Activated T-helper 1 cell treated with anti-CD3 and anti-CD28 coated beads, Interleukin-12 subunit alpha, Interleukin-12 subunit beta, Interleukin-2, Interleukin-4 antibody, amounts not matched to agents 30 ng/mL and 10 ng/mL and 1 ng/mL, durations not matched to agents 14 hours and 24 hours and 36 hours (primary cell): ENCODE measurements at regions of chr10 and their contacts with region 1.

Region 1: GRCh38 chr10:24503461-24504320 is 220.0 kb downstream of the ARHGAP21 start:
- DNase-seq: no peak
- H3K4me3 Mint-ChIP-seq: no peak overlapping the region
- H3K27ac Mint-ChIP-seq: no peak overlapping the region
- H3K4me1 Mint-ChIP-seq: peaks cover 9% of the 10 kb centered on the region
- H3K27me3 Mint-ChIP-seq: peaks cover 2% of the 10 kb centered on the region

Region 2: DNA sequence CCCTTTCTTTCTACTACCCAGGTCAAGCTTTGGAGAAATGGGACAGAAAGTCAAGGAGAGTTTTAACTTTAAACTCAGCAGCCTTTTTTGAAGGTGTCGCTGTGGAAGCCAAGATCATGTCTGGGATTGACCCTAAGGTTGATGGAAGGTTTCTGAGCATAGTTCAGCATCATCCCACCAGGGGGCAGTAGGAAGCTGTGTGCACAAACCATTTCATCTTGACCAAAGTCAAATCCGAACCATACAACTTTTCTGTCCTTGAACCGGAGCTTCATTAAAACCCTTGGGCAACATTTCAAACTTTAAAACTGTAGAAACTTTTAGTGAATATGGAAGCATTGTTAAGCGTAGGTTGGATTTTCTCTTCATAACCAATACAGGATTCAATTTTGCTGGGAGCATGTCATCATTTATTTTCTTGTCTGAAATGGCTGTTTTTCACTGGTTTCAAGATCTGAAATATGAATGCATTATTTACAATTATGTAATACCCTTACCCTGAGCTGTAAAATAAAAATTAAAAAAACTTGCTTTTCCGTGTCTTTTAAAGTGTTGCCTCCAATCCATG is 509.1 kb before region 1 on chr10:
- intact Hi-C with region 1: loop called (anchors 1 kb)
- DNase-seq: peak; percentile 5
- H3K4me3 Mint-ChIP-seq: no peak overlapping the region
- H3K27ac Mint-ChIP-seq: no peak overlapping the region
- H3K4me1 Mint-ChIP-seq: no peaks in the 10 kb centered on the region
- H3K27me3 Mint-ChIP-seq: no peaks in the 10 kb centered on the region

Region 3: DNA sequence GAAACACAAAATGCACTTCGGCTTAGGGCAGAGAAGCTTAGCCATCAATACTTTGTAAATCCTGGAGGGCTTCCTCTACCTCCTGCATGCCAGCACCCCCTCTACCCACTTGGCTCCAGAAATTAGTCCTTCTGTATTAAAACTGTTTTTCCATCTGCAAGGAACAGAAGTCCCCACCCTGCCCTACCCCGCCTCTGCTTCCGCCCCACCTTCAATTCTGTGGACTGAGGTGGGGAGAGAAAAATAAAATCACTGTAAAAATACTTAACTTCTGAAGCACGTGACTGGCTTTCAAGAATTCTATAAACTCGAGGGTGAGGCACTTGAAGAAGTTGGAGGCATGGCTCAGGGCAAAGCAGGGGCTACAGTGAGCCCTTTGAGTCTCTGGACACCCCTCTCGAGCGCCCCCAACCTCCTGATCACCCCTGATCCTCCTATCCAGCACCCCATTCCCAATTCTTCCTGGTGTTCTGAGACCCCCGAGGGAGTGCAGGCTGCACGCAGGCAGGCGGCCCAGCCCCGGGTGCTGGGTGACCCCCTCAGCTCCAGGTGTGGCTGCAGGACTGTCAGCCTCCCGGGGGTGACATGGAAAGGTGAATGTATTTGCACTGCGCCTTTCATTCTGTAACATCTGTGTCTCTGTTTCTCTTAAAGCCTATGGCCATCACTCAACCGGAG is 302.0 kb before region 1 on chr10:
- intact Hi-C with region 1: loop called (anchors 1 kb)
- DNase-seq: no peak
- H3K4me3 Mint-ChIP-seq: no peak overlapping the region
- H3K27ac Mint-ChIP-seq: no peak overlapping the region
- H3K4me1 Mint-ChIP-seq: peaks cover 9% of the 10 kb centered on the region
- H3K27me3 Mint-ChIP-seq: peaks cover 22% of the 10 kb centered on the region

Region 4: GRCh38 chr10:24360282-24361127 is 143.2 kb before region 1 on chr10:
- intact Hi-C with region 1: loop called (anchors 1 kb)
- DNase-seq: peak; percentile 5
- H3K4me3 Mint-ChIP-seq: no peak overlapping the region
- H3K27ac Mint-ChIP-seq: no peak overlapping the region
- H3K4me1 Mint-ChIP-seq: peaks cover 6% of the 10 kb centered on the region
- H3K27me3 Mint-ChIP-seq: peaks cover 7% of the 10 kb centered on the region

Region 5: DNA sequence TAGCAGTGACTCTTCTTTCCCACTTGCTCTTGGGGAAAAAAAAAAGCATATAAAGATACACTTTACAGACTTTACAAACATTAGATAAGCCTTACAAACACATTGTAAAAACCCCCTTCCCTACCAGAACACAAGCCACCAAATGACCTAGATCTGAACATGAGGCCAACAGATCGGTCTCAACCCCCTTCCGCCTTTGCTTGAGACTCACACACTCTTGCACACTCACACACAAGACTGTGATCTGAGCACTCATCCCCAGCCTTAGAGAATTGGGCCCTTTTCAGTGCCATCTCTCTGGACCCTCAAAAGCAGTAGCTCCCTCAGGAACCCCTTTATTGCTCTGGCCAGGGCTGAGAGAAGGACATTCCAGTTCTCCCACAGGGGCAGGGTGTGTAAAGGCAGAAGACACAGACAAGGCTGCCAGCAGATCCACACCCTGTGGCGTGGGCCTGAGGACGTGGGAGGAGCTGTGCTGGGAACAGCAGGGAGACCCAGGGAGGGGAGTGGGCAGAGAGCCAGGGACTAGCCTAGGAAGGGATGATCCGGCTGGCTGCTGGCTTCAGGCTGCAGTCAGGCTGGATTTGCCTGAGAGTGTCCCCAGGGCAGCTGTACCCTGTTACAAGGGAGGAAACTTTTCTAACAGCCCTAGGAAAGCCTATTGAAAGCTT is 88.1 kb before region 1 on chr10:
- intact Hi-C with region 1: loop called (anchors 1 kb)
- DNase-seq: no peak
- H3K4me3 Mint-ChIP-seq: no peak overlapping the region
- H3K27ac Mint-ChIP-seq: no peak overlapping the region
- H3K4me1 Mint-ChIP-seq: no peaks in the 10 kb centered on the region
- H3K27me3 Mint-ChIP-seq: no peaks in the 10 kb centered on the region

Region 6: GRCh38 chr10:24518981-24519597 is 15.4 kb after region 1 on chr10:
- intact Hi-C with region 1: no loop called
- DNase-seq: peak; percentile 17
- H3K4me3 Mint-ChIP-seq: no peak overlapping the region
- H3K27ac Mint-ChIP-seq: peak overlapping the region; percentile 11
- H3K4me1 Mint-ChIP-seq: peaks cover 30% of the 10 kb centered on the region
- H3K27me3 Mint-ChIP-seq: peaks cover 4% of the 10 kb centered on the region